Dendritic cell treated with granulocyte-macrophage colony-stimulating factor and Interleukin-4, amounts not matched to agents 40 ng/mL and 50 ng/mL, for 4 days (primary cell): ENCODE measurements at regions of chrX and their contacts with region 1.

Region 1: GRCh38 chrX:8743126-8743732 is 11.3 kb upstream of the ANOS1 start:
- H3K4me3 Mint-ChIP-seq: no peak overlapping the region
- H3K27ac Mint-ChIP-seq: no peak overlapping the region
- H3K4me1 Mint-ChIP-seq: no peaks in the 10 kb centered on the region
- H3K27me3 Mint-ChIP-seq: peaks cover 2% of the 10 kb centered on the region

Region 2: DNA sequence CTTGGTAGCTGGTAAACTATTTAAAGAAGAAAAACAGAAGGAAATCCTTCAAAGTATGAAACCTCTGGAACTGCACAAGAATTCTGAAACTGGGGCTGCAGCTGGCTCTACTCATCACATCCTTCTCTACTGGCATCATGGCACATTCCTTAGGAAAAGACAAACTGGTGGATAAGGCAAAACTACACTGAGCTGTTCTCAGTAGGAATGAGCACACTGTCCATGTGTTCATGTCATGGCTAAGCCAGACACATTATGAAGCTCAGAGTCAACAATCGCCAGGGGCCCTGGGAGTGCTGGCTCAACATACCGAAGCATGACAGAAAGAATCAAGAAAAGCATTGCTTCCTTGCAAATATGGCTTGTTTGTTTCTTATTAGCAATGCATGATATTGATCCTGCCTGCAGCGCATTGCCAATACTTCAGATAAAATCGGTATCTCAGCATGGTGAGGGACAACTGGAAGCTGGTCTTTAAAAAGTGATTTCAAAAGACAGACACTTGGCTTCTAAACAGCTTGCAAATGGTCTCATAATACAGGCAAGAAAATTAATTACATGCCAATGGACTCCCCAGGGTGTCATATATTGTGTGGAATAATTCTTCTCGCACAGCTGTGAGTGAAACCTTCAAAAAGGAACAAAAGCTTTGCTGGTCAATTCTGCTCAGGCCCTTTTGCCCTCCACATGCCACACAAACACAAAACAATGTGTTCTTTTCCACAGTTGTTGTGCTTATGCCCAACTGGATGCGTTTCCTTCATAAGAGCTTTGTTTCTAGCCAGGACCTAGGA is 1200.4 kb before region 1 on chrX:
- intact Hi-C with region 1: no loop called
- H3K4me3 Mint-ChIP-seq: no peak overlapping the region
- H3K27ac Mint-ChIP-seq: no peak overlapping the region
- H3K4me1 Mint-ChIP-seq: no peaks in the 10 kb centered on the region
- H3K27me3 Mint-ChIP-seq: no peaks in the 10 kb centered on the region

Region 3: GRCh38 chrX:7996414-7996813 is 746.8 kb before region 1 on chrX:
- intact Hi-C with region 1: loop called (anchors 1 kb)
- H3K4me3 Mint-ChIP-seq: no peak overlapping the region
- H3K27ac Mint-ChIP-seq: no peak overlapping the region
- H3K4me1 Mint-ChIP-seq: no peaks in the 10 kb centered on the region
- H3K27me3 Mint-ChIP-seq: no peaks in the 10 kb centered on the region

Region 4: DNA sequence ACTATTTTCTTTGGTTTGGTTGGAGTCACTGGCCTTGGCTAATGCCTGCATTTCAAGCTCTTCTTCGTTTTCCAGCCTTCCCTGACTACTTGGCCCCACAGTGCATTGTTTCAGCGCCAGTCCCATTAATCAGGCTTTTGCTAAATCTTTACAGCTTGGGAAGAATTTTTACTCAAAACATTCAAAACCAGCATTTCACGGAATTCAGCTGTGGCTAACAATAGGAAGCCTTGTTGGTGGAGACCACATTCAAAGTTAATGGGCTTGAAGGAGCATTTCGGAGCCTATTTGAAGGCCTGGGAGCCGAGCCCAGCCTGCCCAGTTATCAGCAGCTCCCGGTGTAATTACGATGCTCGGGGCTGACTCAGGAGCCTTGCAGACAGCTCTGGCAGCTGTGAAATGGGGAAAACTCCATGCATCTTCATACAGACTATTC is 541.3 kb before region 1 on chrX:
- intact Hi-C with region 1: no loop called
- H3K4me3 Mint-ChIP-seq: no peak overlapping the region
- H3K27ac Mint-ChIP-seq: no peak overlapping the region
- H3K4me1 Mint-ChIP-seq: no peaks in the 10 kb centered on the region
- H3K27me3 Mint-ChIP-seq: no peaks in the 10 kb centered on the region

Region 5: DNA sequence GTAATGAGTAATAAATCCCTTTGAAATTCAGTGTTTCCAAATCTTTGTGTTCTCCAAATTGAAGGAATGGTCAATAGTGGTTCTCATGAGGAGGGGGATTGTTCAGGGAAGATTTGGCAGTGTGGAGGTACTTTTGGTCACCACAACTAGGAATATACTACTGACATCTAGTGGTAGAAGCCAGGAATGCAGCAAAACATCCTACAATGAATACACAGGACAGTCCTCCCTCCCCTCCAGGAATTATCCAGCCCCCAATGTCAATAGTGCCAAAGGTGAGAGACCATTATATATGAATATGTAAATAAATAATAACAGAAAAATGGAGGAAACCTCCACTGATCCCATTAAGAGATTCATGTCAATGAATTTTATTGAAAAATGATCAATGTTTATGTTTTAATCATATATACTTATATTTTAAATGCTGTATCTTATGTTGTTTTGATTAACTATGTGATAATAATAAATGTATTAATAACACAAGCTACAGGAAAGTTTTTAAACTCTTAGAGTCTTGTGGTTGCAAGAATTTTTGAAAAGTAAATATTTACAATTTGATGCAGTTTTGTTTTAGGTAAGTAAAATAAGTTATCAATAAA is 72.3 kb after region 1 on chrX:
- intact Hi-C with region 1: loop called (anchors 2 kb)
- H3K4me3 Mint-ChIP-seq: no peak overlapping the region
- H3K27ac Mint-ChIP-seq: no peak overlapping the region
- H3K4me1 Mint-ChIP-seq: no peaks in the 10 kb centered on the region
- H3K27me3 Mint-ChIP-seq: peaks cover 6% of the 10 kb centered on the region

Region 6: GRCh38 chrX:8861908-8862307 is 118.7 kb after region 1 on chrX:
- intact Hi-C with region 1: no loop called
- H3K4me3 Mint-ChIP-seq: no peak overlapping the region
- H3K27ac Mint-ChIP-seq: no peak overlapping the region
- H3K4me1 Mint-ChIP-seq: no peaks in the 10 kb centered on the region
- H3K27me3 Mint-ChIP-seq: peaks cover 16% of the 10 kb centered on the region

Region 7: GRCh38 chrX:9379697-9380551 is 636.7 kb after region 1 on chrX:
- intact Hi-C with region 1: no loop called
- H3K4me3 Mint-ChIP-seq: no peak overlapping the region
- H3K27ac Mint-ChIP-seq: no peak overlapping the region
- H3K4me1 Mint-ChIP-seq: peaks cover 31% of the 10 kb centered on the region
- H3K27me3 Mint-ChIP-seq: peaks cover 3% of the 10 kb centered on the region